IMR-90 (cell line): ENCODE measurements at regions of chr1 and their contacts with region 1.

Region 1: DNA sequence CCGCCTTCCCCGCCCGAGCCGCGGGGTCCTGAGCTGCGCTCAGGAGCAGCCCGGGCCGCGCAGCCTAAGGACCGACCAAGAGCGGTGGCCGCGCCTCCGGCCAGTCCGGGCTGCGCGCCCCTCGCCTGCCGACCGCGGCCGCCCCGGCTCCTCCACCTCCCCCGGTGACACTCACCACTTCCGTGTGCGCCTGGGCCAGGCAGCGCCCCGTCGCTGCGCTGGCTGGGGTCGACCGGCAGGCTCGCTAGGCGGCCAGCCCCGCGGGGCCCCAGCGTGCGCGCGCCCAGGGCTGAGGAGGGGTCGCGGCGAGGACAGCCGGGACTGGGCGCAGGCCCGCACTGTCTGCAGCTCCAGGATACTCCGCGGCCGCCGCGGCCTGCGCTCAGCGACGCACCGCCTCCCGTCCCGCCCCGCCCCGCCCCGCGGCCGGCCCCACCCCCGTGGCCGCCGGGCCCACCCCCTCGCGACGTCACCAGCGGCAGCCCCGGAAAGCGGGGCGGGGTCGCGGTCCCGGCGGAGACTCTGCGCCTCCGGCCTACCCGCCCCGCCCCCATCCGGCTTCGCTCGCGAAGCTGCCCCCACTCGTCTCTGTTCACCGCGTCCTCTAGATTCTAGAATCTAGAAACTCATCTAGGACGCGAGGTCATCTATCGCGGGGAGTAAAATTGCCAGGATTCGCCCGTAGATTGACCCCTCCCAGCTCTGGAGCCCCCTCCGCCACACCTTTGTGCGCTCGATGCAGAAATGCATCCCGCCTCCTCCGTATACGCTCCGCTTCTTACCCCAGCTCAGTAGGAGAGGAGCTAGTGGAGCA is at the start of gene JAK1:
- DNase-seq: peak; percentile 72
- ATAC-seq: peak; percentile 96
- H3K4me3 ChIP-seq: peak within 1 kb of the TSS; percentile 91
- H3K27ac ChIP-seq: peak within 1 kb of the TSS; percentile 97
- H3K4me1 ChIP-seq: peaks cover 2% of the 10 kb centered on the region; the same call in 1 of the 2 replicates
- H3K27me3 ChIP-seq: no peaks in the 10 kb centered on the region
- CTCF ChIP-seq: no peak
- POLR2A ChIP-seq: peak; percentile 89
- RAD21 ChIP-seq: no peak; the same call in 1 of the 2 replicates
- total RNA-seq, gene JAK1: 101 and 103 TPM in 2 replicates

Region 2: DNA sequence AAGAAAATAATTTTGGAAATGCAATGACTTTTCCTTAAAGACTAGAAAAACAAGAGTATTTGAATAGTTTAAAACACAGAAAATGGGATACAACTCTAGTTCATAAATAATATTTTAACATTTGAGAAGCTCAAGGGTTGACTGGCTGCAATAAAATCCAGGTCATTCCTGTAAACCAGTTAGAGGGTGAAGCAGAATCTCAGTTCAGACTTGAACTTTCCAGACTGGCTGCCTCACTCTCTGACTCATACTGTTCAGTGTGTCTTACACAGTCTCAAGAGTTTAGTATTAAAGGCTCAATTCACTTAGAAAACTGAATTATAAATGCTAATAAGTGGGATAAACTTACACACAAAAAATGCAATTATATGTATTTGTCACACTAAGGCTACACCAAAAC is 131.6 kb before region 1 on chr1:
- CTCF ChIA-PET with region 1: interaction called, 3 read pairs
- POLR2A ChIA-PET with region 1: no interaction called
- dilution Hi-C with region 1: no loop called
- in situ Hi-C with region 1: no loop called
- intact Hi-C with region 1: loop called (anchors 5 kb)
- DNase-seq: peak; percentile 79
- ATAC-seq: peak; percentile 93
- H3K4me3 ChIP-seq: no peak overlapping the region
- H3K27ac ChIP-seq: no peak overlapping the region
- H3K4me1 ChIP-seq: no peaks in the 10 kb centered on the region
- H3K27me3 ChIP-seq: no peaks in the 10 kb centered on the region
- CTCF ChIP-seq: no peak
- POLR2A ChIP-seq: no peak
- RAD21 ChIP-seq: no peak

Region 3: DNA sequence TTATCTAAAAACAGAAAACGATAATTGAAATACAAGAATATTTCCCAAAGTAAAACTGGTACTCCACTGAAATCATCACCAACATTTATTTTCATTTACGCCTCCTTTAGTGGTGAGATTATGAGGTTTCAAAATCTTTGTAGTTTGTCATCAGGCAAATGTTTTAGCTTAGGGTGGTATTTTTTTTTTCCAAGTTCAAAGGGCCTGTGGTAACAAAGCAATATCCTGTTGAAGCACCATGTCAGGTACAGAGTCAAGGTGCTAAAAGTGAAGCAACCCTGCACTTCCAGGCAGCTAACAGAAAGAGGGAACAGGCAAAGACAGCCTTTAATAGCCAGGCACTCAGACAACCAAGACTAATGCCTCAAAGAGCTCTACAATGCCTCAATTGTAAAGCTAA is 89.2 kb before region 1 on chr1:
- CTCF ChIA-PET with region 1: no interaction called
- POLR2A ChIA-PET with region 1: no interaction called
- dilution Hi-C with region 1: no loop called
- in situ Hi-C with region 1: no loop called
- intact Hi-C with region 1: loop called (anchors 5 kb)
- DNase-seq: no peak
- ATAC-seq: no peak
- H3K4me3 ChIP-seq: no peak overlapping the region
- H3K27ac ChIP-seq: no peak overlapping the region
- H3K4me1 ChIP-seq: peaks cover 3% of the 10 kb centered on the region
- H3K27me3 ChIP-seq: no peaks in the 10 kb centered on the region
- CTCF ChIP-seq: no peak
- POLR2A ChIP-seq: no peak
- RAD21 ChIP-seq: no peak

Region 4: DNA sequence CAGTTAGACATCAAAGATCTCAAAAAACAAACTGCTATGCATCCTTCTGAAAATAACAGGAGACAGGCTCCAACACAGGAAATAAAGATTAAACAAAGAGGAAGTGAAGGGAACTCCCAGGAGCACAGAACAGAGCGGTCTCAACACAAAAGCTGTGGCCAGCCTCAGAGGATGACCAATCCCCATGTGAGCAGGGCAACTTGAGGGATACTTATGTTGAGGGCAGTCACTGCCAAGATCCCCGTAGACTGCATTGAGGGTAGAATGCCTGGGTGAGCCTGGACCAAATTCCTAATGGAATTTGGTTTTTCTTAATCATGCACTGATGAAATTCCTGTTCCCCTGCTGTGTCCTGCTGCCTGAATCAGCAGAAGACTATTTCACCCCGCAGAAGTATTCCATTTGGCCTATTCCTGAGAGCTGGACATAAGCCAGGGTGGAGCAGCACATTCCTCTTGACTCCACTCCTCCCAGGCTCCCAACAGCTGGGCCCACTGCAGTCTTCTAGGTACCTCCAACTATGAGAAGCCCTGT is 49.0 kb before region 1 on chr1:
- CTCF ChIA-PET with region 1: no interaction called
- POLR2A ChIA-PET with region 1: no interaction called
- dilution Hi-C with region 1: no loop called
- in situ Hi-C with region 1: no loop called
- intact Hi-C with region 1: loop called (anchors 2 kb)
- DNase-seq: peak; percentile 99
- ATAC-seq: peak; percentile 85
- H3K4me3 ChIP-seq: no peak overlapping the region
- H3K27ac ChIP-seq: peak overlapping the region; percentile 93
- H3K4me1 ChIP-seq: peaks cover 19% of the 10 kb centered on the region
- H3K27me3 ChIP-seq: no peaks in the 10 kb centered on the region
- CTCF ChIP-seq: no peak
- POLR2A ChIP-seq: peak; percentile 65
- RAD21 ChIP-seq: peak; percentile 14; the same call in 1 of the 2 replicates

Region 5: DNA sequence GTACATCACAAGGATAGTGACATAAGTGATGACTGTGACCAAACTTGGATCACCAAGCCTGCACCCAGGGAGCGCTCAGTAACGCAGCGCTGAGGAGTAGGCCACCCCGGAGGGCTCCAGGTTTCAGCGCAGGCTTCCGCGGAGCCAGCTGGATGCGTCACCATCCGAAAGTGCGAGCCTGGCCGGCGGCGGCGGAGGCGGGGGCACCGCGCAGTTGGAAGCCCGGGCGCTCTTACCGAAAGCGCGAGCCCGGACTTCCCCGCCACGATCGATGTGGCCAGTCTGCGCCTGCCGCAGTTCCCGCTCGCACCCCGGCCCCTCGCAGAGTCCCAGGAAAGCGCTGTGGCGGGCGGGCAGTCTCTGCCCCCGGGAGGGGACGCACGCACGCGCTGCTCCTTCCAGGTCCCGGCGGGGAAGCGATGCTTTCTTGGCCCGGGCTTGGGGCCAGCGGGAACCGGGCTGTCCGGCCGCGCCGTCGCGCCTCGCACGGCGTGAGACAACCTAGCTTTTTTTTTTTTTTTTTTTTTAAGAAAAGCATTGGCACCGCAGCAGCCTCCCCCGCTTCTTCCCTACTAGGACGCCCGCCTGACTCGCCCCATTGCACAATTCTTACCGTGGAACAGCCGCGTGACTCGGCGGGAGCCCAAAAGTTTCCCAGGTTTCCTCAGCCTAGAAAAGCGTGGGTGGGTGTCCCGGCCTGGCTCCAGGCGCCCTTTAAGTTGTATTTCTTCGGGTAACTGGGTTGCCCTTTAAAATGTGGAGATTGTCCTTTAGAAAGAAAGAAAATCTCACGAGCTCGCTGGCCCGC is 36.3 kb after region 1 on chr1:
- CTCF ChIA-PET with region 1: no interaction called
- POLR2A ChIA-PET with region 1: no interaction called
- dilution Hi-C with region 1: no loop called
- in situ Hi-C with region 1: no loop called
- intact Hi-C with region 1: loop called (anchors 2 kb)
- DNase-seq: peak; percentile 79
- ATAC-seq: peak; percentile 92
- H3K4me3 ChIP-seq: peak overlapping the region; percentile 58
- H3K27ac ChIP-seq: peak overlapping the region; percentile 82
- H3K4me1 ChIP-seq: peaks cover 9% of the 10 kb centered on the region
- H3K27me3 ChIP-seq: no peaks in the 10 kb centered on the region
- CTCF ChIP-seq: no peak
- POLR2A ChIP-seq: peak; percentile 72; the same call in 1 of the 2 replicates
- RAD21 ChIP-seq: no peak